BJ (cell line): ENCODE measurements at regions of chr6 and their contacts with region 1.

Region 1: GRCh38 chr6:33126101-33126714 is 50.4 kb downstream of the HLA-DPB1 start:
- DNase-seq: no peak
- H3K4me3 ChIP-seq: no peak overlapping the region
- H3K27me3 ChIP-seq: peaks cover 8% of the 10 kb centered on the region
- CTCF ChIP-seq: peak; percentile 66

Region 2: GRCh38 chr6:33014841-33015634 is 111.2 kb before region 1 on chr6:
- CTCF ChIA-PET with region 1: interaction called, 14 read pairs
- POLR2A ChIA-PET with region 1: no interaction called
- DNase-seq: peak; percentile 43
- H3K4me3 ChIP-seq: no peak overlapping the region
- H3K27me3 ChIP-seq: peaks cover 26% of the 10 kb centered on the region
- CTCF ChIP-seq: peak; percentile 72

Region 3: DNA sequence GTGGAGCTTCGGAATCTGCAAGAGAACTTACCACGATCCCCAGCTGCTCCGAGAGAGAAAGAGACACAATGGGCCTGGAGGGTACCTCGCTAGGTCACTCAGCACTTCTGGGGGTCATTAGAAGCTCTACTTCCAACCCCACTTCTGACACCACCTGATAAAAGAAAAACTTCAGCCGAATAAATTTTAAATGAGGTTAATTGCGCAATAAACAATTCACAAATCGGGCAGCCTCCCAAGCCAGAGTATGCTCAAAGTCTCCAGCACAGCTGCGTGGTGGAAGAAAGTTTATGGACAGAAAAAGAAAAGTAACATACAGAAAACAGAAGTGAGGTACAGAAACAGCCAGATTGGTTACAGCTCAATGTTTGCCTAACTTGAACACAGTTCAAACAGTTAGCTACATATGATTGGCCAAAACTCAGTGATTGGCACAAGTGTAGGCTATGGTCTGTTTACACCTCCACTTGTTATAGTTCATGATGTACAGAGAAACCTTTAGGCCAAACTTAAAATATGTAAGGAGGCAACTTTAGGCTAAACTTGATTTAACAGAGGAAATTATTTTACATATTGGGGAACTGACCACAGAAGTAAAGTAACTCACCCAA is 13.5 kb after region 1 on chr6:
- CTCF ChIA-PET with region 1: interaction called, 10 read pairs
- POLR2A ChIA-PET with region 1: no interaction called
- DNase-seq: no peak
- H3K4me3 ChIP-seq: no peak overlapping the region
- H3K27me3 ChIP-seq: peaks cover 5% of the 10 kb centered on the region
- CTCF ChIP-seq: no peak

Region 4: DNA sequence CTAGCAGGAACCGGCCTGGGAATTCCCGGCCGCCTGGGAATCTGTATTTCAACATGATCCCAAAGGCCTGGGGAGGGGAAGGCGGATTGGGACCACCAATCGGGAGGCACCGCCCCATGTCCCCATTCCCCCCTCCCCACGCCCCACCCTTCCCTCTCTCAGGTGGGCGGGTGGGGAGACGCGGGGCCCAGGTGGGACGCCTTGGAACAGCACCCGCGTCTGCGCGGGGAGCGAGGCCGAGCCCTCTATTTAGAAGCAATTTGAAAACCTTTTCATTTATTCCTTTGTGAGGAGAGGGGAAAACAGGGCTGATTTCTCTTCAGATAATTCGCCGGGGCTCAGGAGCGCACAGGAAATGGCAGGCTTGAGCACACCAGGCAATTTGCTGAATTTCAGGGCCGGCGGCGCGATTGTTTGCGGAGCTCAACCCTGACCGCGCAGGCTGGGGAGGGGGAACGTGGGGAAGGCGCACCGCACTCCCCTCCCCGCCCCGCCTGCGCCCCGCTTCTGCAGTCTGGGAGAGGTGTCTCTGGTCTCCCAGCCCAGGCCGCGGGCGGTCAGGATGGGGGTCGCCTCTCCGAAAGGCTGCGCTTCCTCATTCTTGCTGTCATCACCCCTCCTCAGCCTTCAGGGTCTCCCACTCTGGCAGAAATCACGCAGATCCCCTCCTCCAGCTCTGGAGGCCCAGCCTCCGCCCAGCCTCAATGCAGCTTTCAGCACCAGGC is 849.6 kb after region 1 on chr6:
- CTCF ChIA-PET with region 1: no interaction called
- POLR2A ChIA-PET with region 1: no interaction called
- DNase-seq: no peak
- H3K4me3 ChIP-seq: no peak overlapping the region
- H3K27me3 ChIP-seq: peaks cover 20% of the 10 kb centered on the region
- CTCF ChIP-seq: no peak